Heart right ventricle (tissue), 16 donors: ENCODE measurements at regions of chr3 and their contacts with region 1.

Region 1: DNA sequence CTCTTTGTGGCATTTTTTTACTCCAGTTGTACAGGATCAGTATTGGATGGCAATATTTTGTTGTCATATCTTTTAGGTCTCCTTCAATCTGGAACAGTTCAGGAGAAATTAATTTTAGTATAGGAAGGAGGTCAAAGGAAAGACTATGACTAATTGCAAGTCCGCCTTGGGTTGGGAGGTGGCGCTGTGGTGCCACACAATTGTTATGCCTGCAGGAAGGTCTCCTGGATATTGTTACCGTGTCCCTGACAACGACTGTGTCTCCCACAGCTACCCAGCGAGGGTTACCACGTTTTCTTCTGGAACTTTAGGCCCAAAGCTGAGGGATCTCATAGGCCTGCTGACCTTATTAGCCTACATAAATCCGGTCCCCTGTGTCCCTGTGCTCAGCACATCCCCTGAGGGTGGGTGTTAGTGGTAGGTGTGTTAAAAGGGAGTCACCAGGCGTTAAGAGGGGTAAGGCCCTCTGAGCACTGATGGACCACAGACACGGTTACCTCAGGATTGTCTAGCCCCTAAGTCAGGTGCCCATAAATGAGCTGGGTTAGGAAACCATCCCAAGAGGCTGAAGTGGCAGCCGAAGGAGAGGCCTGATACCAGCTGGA is 31.5 kb downstream of the KCNAB1 start:
- DNase-seq: peak; percentile 53 to 69
- ATAC-seq: peak; percentile 39 to 81 (median 76)
- H3K4me3 ChIP-seq: no peak overlapping the region
- H3K27ac ChIP-seq: peak overlapping the region in 1 of 10 donors; percentile 73
- H3K4me1 ChIP-seq: peaks cover 6 to 42% (median 26%) of the 10 kb centered on the region in 9 donors
- H3K27me3 ChIP-seq: no peaks in the 10 kb centered on the region
- CTCF ChIP-seq: peak; percentile 34 to 84 (median 78)

Region 2: DNA sequence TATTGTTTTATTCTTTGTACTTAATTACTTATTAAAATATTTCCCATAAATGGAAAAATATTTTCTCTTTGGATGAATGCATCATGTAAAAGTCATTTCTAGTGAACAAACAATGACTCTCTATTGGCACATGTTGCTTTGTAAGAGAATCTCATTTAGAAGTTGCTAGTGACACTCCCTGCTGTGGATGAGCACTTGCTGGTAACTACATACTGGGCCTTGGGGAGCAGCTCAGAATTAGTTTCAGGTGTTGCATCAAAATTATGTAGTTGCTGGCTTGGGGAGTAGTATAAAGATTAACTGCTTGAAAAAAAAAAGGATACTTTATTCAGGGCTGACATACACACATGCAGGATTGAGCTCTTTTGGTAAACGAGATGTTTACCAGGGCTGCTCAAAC is 111.9 kb before region 1 on chr3:
- intact Hi-C with region 1: loop called in 4 of 10 experiments (anchors 5 to 10 kb)
- DNase-seq: no peak
- ATAC-seq: no peak
- H3K4me3 ChIP-seq: no peak overlapping the region
- H3K27ac ChIP-seq: no peak overlapping the region
- H3K4me1 ChIP-seq: peaks cover 0 to 6% (median 0%) of the 10 kb centered on the region in 9 donors
- H3K27me3 ChIP-seq: peaks cover 0 to 6% (median 0%) of the 10 kb centered on the region in 7 donors
- CTCF ChIP-seq: no peak

Region 3: GRCh38 chr3:156382458-156383346 is 230.8 kb after region 1 on chr3:
- intact Hi-C with region 1: loop called in 2 of 10 experiments (anchors 2 to 10 kb)
- DNase-seq: no peak
- ATAC-seq: no peak
- H3K4me3 ChIP-seq: no peak overlapping the region
- H3K27ac ChIP-seq: peak overlapping the region in 4 of 10 donors; percentile 6 to 61 (median 36)
- H3K4me1 ChIP-seq: peaks cover 0 to 29% (median 3%) of the 10 kb centered on the region in 9 donors
- H3K27me3 ChIP-seq: peaks cover 0 to 4% (median 0%) of the 10 kb centered on the region in 7 donors
- CTCF ChIP-seq: peak in 7 of 9 donors; percentile 30 to 60 (median 38)

Region 4: GRCh38 chr3:156456771-156457224 is 304.9 kb after region 1 on chr3:
- intact Hi-C with region 1: loop called in 4 of 10 experiments (anchors 5 to 10 kb)
- DNase-seq: no peak
- ATAC-seq: no peak
- H3K4me3 ChIP-seq: no peak overlapping the region
- H3K27ac ChIP-seq: no peak overlapping the region
- H3K4me1 ChIP-seq: peaks cover 0 to 18% (median 7%) of the 10 kb centered on the region in 9 donors
- H3K27me3 ChIP-seq: no peaks in the 10 kb centered on the region
- CTCF ChIP-seq: no peak

Region 5: GRCh38 chr3:156674046-156674910 is 522.4 kb after region 1 on chr3 and contains the start of gene TIPARP:
- intact Hi-C with region 1: loop called in 4 of 10 experiments (anchors 2 to 10 kb)
- DNase-seq: peak; percentile 99 to 100
- ATAC-seq: peak; percentile 96 to 99 (median 97)
- H3K4me3 ChIP-seq: peak within 1 kb of the TSS; percentile 72 to 98 (median 92)
- H3K27ac ChIP-seq: peak within 1 kb of the TSS; percentile 93 to 98 (median 97)
- H3K4me1 ChIP-seq: peaks cover 0 to 52% (median 35%) of the 10 kb centered on the region in 9 donors
- H3K27me3 ChIP-seq: no peaks in the 10 kb centered on the region
- CTCF ChIP-seq: peak; percentile 50 to 85 (median 72)
- total RNA-seq, gene TIPARP: 19.8 to 74.6 (median 23.9) TPM